Left lung (tissue), 14 donors: ENCODE measurements at regions of chr11 and their contacts with region 1.

Region 1: GRCh38 chr11:6353367-6353987 is 33.2 kb upstream of the CAVIN3 start:
- DNase-seq: peak in 3 of 4 donors; percentile 30 to 66 (median 41)
- ATAC-seq: peak; percentile 82
- H3K4me3 ChIP-seq: no peak overlapping the region
- H3K27ac ChIP-seq: no peak overlapping the region
- H3K4me1 ChIP-seq: peaks cover 0 to 12% of the 10 kb centered on the region in 2 donors
- H3K27me3 ChIP-seq: no peaks in the 10 kb centered on the region
- CTCF ChIP-seq: peak; percentile 86 to 94

Region 2: DNA sequence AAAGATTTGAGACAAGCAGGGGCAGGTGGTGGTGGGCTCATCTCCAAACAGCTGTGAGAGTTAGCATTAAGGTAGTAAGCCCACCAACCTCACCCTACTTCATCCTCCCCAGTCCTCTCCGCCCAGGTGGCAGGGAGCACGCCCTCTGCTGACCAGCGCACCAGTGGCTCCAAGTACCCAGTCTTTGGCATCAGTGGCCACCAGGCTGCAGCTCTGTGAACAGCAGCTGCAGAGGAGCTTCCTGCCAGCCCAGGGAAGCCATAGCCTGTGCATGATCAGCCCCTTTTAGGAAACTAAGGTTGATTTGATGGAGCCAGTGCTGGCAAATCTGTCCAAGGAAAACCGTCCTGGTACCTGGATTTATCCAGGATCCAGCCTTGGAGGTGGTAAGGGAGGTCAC is 54.9 kb before region 1 on chr11:
- intact Hi-C with region 1: loop called in 1 of 2 experiments (anchors 5 kb)
- DNase-seq: peak in 1 of 4 donors; percentile 77
- ATAC-seq: peak; percentile 84
- H3K4me3 ChIP-seq: no peak overlapping the region
- H3K27ac ChIP-seq: no peak overlapping the region
- H3K4me1 ChIP-seq: no peaks in the 10 kb centered on the region
- H3K27me3 ChIP-seq: no peaks in the 10 kb centered on the region
- CTCF ChIP-seq: peak; percentile 27 to 34

Region 3: GRCh38 chr11:6646576-6646917 is 293.1 kb after region 1 on chr11:
- intact Hi-C with region 1: no loop called
- DNase-seq: peak in 1 of 4 donors; percentile 54
- ATAC-seq: peak; percentile 30
- H3K4me3 ChIP-seq: no peak overlapping the region
- H3K27ac ChIP-seq: peak overlapping the region; percentile 58 to 81
- H3K4me1 ChIP-seq: peaks cover 21 to 42% of the 10 kb centered on the region in 2 donors
- H3K27me3 ChIP-seq: peaks cover 0 to 5% of the 10 kb centered on the region in 2 donors
- CTCF ChIP-seq: no peak